Common myeloid progenitor, CD34-positive (primary cell): ENCODE measurements at regions of chr1 and their contacts with region 1.

Region 1: DNA sequence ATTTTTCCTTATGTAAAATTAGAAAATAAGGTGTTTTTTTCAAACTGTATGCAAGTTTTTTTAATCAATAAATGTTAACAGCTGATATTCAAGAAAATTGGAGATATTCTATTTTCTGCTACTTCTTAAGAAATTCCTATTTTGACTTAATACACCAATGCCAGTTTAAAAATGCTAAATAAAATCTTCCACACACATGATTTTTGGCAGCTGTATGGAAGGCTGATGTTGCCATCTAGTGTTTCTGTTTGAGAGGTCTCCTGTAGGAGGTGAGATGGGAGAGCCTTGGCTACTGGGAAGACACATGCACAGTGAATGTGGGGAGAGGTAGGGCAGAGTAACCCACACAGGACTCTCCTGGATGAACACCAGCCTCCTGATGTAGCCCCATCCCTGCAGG is 29.2 kb upstream of the OR2B11 start:
- DNase-seq: peak; percentile 74 to 81 (median 78)
- H3K4me3 ChIP-seq: no peak overlapping the region
- H3K27ac ChIP-seq: no peak overlapping the region
- H3K4me1 ChIP-seq: peaks cover 0 to 2% (median 1%) of the 10 kb centered on the region in 4 experiments
- H3K27me3 ChIP-seq: peaks cover 0 to 4% (median 0%) of the 10 kb centered on the region in 5 experiments

Region 2: GRCh38 chr1:247373721-247374141 is 113.3 kb before region 1 on chr1:
- CTCF ChIA-PET with region 1: interaction called, 70 read pairs
- POLR2A ChIA-PET with region 1: no interaction called
- DNase-seq: peak; percentile 71 to 78 (median 76)
- H3K4me3 ChIP-seq: peak overlapping the region; percentile 10 to 78 (median 52)
- H3K27ac ChIP-seq: no peak overlapping the region
- H3K4me1 ChIP-seq: peaks cover 0 to 3% (median 2%) of the 10 kb centered on the region in 4 experiments
- H3K27me3 ChIP-seq: no peaks in the 10 kb centered on the region

Region 3: DNA sequence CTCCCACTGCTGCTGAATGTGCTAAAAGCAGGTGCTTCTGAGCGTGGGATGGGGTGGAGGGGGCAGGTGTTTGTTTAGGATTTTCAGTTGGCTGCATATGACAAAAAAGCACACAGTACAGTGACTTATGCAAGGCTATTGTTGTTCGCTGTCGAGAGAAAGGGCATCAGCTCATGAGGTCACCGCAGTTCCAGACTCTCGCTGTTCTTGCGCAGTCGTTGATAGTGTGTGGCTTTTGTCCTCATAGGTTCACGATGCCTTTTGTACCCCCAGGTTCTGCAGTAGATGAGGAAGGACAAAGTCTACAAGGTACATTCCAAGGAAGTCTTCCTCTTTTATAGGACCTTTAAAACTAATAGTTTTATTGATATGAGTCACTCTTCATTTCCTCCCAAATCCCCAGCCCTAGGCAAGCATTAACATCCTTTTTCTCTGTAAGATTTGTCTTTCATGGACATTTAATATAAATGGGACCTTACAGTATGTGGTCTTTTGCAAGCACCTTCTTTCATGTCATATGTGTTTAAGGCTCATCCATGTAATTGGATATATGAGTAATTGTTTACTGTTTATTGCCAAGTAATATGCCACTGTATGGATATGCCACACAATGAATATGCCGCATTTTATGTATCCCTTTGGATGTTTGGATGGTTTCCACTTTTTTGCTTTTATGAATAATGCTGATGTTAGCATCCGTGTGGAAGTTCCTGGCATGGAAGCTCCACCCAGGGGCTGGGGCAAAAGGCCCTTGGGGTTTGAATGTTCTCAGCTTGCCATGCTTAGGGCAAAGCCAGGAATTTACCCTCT is 85.5 kb before region 1 on chr1:
- CTCF ChIA-PET with region 1: no interaction called
- POLR2A ChIA-PET with region 1: no interaction called
- DNase-seq: no peak
- H3K4me3 ChIP-seq: no peak overlapping the region
- H3K27ac ChIP-seq: no peak overlapping the region
- H3K4me1 ChIP-seq: peaks cover 0 to 7% (median 5%) of the 10 kb centered on the region in 4 experiments
- H3K27me3 ChIP-seq: no peaks in the 10 kb centered on the region

Region 4: DNA sequence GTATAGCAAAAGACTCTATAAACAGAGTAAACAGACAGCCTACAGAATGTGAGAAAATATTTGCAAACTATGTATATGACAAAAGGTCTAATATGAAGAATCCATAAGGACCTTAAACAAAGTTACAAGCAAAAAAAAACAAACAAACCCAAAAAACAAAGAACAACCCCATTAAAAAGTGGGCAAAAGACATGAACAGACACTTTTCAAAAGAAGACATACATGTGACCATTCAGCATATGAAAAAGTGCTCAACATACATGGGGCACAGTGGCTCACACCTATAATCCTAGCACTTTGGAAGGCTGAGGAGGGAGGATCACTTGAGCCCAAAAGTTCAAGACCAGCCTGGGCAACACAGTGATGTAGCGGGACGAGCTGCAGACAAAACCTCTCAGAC is 11.3 kb before region 1 on chr1:
- CTCF ChIA-PET with region 1: interaction called, 11 read pairs
- POLR2A ChIA-PET with region 1: no interaction called
- DNase-seq: no peak
- H3K4me3 ChIP-seq: no peak overlapping the region
- H3K27ac ChIP-seq: no peak overlapping the region
- H3K4me1 ChIP-seq: peaks cover 0 to 3% (median 0%) of the 10 kb centered on the region in 4 experiments
- H3K27me3 ChIP-seq: no peaks in the 10 kb centered on the region

Region 5: GRCh38 chr1:247542811-247543210 is 55.8 kb after region 1 on chr1:
- CTCF ChIA-PET with region 1: interaction called, 12 read pairs
- POLR2A ChIA-PET with region 1: no interaction called
- DNase-seq: peak in 1 of 3 donors; percentile 57
- H3K4me3 ChIP-seq: no peak overlapping the region
- H3K27ac ChIP-seq: no peak overlapping the region
- H3K4me1 ChIP-seq: peaks cover 27 to 61% (median 46%) of the 10 kb centered on the region in 4 experiments
- H3K27me3 ChIP-seq: no peaks in the 10 kb centered on the region

Region 6: GRCh38 chr1:247854899-247855545 is 368.0 kb after region 1 on chr1:
- CTCF ChIA-PET with region 1: no interaction called
- POLR2A ChIA-PET with region 1: no interaction called
- DNase-seq: peak; percentile 66 to 92 (median 86)
- H3K4me3 ChIP-seq: no peak overlapping the region
- H3K27ac ChIP-seq: peak overlapping the region in 1 of 2 experiments; percentile 54
- H3K4me1 ChIP-seq: peaks cover 13 to 64% (median 44%) of the 10 kb centered on the region in 4 experiments
- H3K27me3 ChIP-seq: no peaks in the 10 kb centered on the region